ENCODE measurements at regions of chr10 and their contacts with region 1.

Region 1: DNA sequence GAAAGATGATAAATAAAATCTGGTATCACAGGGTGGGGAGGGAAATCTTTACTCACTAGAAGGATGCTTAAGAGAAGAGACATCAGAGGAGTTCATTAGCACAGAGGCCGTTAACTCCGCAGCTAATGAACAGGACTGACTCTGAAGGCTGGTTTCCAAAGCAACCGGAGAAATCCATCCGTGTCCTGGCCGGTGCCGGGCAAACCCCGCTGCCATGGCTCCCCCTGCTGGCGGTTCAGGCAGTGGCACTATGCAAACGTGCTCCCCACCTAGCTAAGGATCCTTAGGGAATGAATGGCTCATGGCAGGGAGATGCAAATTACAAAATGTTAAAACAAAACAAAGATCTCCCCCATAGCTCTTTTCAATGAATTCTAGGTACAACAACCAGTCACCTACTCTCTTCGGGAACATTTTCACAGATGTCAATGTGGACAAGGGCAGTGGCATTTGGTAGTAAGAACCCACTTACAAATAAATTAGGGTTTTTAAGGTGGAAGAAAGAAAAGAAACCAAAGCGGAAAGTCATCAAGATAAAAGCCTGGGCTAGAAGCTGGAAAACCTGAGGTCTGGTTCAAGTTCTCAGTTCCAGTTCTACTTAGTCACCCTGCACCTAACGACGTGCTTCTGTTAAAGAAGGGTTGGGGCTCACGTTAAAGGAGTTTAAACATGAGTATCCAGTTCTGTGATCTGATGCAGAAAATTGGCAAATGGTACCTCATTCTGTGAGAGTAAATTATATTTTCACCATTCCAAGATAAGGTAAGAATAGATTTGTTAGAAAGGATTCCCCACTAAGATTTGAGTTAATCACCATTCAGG is 138.2 kb downstream of the SVIL start:
- DNase-seq: peak in 1 of 2 donors; percentile 63
- ATAC-seq: peak; percentile 42 to 64
- H3K4me3 ChIP-seq: no peak overlapping the region
- H3K27ac ChIP-seq: peak overlapping the region in 2 of 4 donors; percentile 59 to 79
- H3K4me1 ChIP-seq: peaks cover 9 to 17% of the 10 kb centered on the region in 2 donors
- H3K27me3 ChIP-seq: no peaks in the 10 kb centered on the region
- CTCF ChIP-seq: peak; percentile 79 to 95 (median 87)
- POLR2A ChIP-seq: no peak

Region 2: DNA sequence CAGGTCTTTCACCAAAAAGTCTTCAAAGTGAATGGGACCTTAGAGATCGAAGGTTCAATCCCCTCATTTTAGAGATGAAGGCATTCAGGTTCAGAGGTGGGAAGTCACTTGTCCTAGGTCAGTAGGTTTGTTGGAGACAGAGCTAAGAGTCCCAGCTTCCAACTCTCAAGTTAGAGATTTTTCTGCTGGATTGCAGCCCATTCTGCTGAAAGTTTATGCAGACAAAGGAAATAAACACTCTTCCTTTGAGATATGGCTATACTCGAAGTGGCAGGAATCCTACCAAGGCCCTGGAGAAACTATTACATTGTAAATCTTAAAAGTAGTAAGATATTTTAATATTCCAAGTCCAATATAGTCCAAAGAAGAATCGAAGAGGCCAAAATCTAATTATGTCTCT is 143.2 kb before region 1 on chr10:
- in situ Hi-C with region 1: no loop called
- intact Hi-C with region 1: no loop called
- DNase-seq: no peak
- ATAC-seq: no peak
- H3K4me3 ChIP-seq: no peak overlapping the region
- H3K27ac ChIP-seq: no peak overlapping the region
- H3K4me1 ChIP-seq: no peaks in the 10 kb centered on the region
- H3K27me3 ChIP-seq: no peaks in the 10 kb centered on the region
- CTCF ChIP-seq: no peak
- POLR2A ChIP-seq: no peak

Region 3: DNA sequence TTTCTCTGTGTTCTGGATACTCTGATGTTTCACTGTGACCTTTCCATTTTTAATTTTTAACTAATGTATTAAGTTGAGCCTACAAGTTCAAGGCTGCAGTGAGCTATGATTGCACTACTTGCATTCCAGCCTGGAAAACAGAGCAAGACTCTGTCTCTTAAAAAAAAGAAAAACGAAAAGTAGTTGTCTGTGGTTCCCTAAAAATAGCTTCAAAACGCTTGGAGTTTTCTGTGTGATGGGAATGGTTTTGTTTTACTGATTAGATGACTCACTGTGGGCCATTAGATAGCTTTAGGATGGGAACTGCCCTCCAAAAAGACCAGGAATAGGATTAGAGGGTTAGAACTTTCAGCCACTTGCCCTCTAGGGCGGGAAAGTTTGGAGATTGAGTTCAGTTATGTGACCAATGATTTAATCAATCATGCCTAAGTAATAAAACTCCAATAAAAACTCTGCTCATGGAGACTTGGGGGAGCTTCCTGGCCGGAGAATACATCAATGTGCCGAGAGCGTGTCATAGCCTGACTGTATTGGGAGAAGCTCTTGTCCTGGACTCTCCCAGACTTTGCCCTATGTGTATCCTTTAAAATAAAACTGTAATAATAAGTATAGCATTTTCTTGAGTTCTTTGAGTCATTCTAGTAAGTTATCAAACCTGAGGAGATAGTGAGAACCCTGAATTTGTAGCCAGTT is 60.6 kb before region 1 on chr10:
- in situ Hi-C with region 1: no loop called
- intact Hi-C with region 1: no loop called
- DNase-seq: no peak
- ATAC-seq: no peak
- H3K4me3 ChIP-seq: no peak overlapping the region
- H3K27ac ChIP-seq: no peak overlapping the region
- H3K4me1 ChIP-seq: peaks cover 0 to 8% of the 10 kb centered on the region in 2 donors
- H3K27me3 ChIP-seq: no peaks in the 10 kb centered on the region
- CTCF ChIP-seq: no peak
- POLR2A ChIP-seq: no peak

Region 4: DNA sequence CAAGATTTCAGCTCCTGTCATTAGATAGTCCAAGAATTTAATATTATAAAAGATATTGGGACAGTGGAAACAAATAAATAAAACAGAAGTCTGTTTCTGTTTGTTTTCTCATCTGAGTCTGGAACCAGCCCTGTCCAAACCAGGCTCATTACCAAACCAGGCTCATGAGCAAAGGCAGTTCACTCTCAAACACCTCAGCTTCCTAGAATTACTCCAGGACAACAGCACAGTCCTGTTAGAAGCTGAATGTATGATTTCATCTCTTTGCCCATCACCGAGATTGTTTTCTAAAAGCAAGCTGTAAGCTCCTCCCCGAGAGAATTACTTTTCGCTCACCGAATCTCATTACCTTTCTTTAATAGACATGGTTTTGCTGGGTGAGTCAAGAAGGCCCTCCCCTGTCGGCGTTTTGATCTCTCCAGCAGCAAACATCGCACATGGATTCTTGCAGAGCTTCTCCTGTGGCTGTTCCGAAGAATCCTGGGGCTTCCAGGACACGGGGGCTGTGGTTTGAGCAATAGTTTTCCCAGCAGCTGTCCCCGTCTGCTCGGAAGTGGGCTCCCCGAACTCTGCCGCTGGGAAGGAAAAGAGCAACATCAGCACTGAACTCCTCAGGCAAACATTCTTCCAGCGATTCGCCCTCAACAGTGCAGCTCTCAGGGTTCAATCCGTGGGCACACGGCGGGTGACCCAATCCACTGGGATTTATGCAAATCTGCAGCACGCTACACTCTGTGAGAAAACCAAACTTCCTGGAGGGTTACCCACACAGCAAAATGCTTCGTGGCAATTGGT is 25.7 kb after region 1 on chr10:
- in situ Hi-C with region 1: no loop called
- intact Hi-C with region 1: no loop called
- DNase-seq: no peak
- ATAC-seq: no peak
- H3K4me3 ChIP-seq: no peak overlapping the region
- H3K27ac ChIP-seq: peak overlapping the region; percentile 82 to 90 (median 87)
- H3K4me1 ChIP-seq: peaks cover 78 to 81% of the 10 kb centered on the region in 2 donors
- H3K27me3 ChIP-seq: no peaks in the 10 kb centered on the region
- CTCF ChIP-seq: no peak
- POLR2A ChIP-seq: no peak

Region 5: DNA sequence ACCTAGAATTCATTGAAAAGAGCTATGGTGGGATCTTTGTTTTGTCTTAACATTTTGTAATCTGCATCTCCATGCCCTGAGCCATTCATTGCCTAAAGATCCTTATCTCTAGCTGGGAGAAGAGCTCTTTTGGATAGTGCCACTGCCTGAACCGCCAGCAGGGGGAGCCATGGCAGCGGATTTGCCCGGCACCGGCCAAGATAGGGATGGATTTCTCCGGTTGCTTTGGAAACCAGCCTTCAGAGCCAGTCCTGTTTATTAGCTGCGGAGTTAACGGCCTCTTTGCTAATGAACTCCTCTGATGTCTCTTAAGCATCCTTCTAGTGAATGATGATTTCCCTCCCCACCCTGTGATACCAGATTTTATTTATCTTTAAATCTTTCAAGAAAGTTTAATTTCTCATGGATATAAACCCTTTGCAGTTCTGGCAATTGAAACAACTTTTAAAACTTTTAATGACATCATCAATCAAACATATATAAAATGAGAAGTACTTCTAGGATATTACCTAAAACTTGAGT is 1191.2 kb after region 1 on chr10:
- in situ Hi-C with region 1: loop called in 1 of 4 experiments (anchors 10 kb)
- intact Hi-C with region 1: no loop called
- DNase-seq: peak; percentile 33 to 43
- ATAC-seq: peak; percentile 67 to 69
- H3K4me3 ChIP-seq: no peak overlapping the region
- H3K27ac ChIP-seq: no peak overlapping the region
- H3K4me1 ChIP-seq: no peaks in the 10 kb centered on the region
- H3K27me3 ChIP-seq: peaks cover 7 to 18% (median 8%) of the 10 kb centered on the region in 3 donors
- CTCF ChIP-seq: peak; percentile 36 to 86 (median 71)
- POLR2A ChIP-seq: no peak

Measured in gastrocnemius medialis (tissue), 4 donors.